Activated CD4-positive, alpha-beta T cell treated with anti-CD3 and anti-CD28 coated beads, Interleukin-2, amount 10 ng/mL, durations not matched to agents 24 days and 14 days (primary cell): ENCODE measurements at regions of chr1 and their contacts with region 1.

Region 1: DNA sequence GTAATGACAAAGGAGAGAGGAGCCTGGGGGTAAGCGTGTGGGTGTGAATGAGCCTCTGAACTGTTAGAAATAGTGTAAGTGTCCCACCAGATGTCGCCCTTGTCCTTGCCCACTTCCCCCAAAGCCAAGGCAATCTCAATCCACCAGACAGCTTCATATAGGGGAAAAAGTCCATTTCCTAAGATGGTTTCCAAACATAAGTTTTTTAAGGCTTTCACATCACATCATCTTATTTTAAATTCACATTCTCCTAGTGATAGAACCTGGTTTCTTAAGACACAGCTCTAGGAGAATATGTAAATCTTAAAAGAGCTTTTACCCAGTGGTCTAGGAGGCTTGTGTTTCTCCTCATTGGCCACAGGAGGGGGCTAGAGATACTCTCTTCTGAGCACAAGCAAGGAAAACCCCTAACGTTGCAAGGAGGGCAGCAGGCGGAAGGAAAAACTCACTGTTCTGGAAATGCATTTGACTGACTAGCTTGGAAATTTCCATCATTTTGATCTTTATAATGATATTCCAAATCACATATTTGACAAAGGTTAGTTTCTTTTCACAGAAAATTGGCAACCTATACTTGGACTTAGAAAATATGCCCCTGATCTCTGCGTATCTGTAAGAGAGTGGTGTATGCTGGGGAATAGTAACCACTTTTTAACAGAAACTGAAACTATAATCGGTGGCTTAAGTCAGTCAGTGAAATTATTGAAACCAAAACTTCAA is 51.9 kb upstream of the LPAR3 start:
- DNase-seq: peak; percentile 94
- H3K4me3 Mint-ChIP-seq: peak overlapping the region; percentile 80
- H3K27ac Mint-ChIP-seq: peak overlapping the region; percentile 86
- H3K4me1 Mint-ChIP-seq: peaks cover 27% of the 10 kb centered on the region
- H3K27me3 Mint-ChIP-seq: no peaks in the 10 kb centered on the region

Region 2: GRCh38 chr1:84735483-84735882 is 209.4 kb before region 1 on chr1:
- intact Hi-C with region 1: no loop called
- DNase-seq: no peak
- H3K4me3 Mint-ChIP-seq: no peak overlapping the region
- H3K27ac Mint-ChIP-seq: no peak overlapping the region
- H3K4me1 Mint-ChIP-seq: no peaks in the 10 kb centered on the region
- H3K27me3 Mint-ChIP-seq: peaks cover 39% of the 10 kb centered on the region

Region 3: DNA sequence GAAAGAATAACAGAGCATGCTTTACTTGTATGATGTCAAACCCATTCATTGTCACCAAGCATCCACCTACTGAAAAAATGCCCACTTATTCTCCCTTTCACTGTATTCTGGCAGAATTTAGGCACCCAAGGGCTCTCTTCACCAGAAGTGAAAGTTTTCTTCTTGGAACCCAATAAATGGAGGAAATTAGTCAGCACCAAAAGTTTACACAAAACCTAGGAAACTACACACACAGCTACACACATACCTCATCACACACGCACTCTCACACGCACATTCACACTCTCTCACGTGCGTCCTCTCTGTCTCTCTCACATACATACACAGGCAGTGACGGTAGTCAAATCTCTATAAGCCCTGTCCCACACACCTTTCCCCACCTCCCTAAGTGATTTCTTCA is 14.4 kb after region 1 on chr1:
- intact Hi-C with region 1: loop called (anchors 1 kb)
- DNase-seq: peak; percentile 85
- H3K4me3 Mint-ChIP-seq: no peak overlapping the region
- H3K27ac Mint-ChIP-seq: peak overlapping the region; percentile 69
- H3K4me1 Mint-ChIP-seq: peaks cover 22% of the 10 kb centered on the region
- H3K27me3 Mint-ChIP-seq: no peaks in the 10 kb centered on the region

Region 4: GRCh38 chr1:84988588-84988987 is 43.7 kb after region 1 on chr1:
- intact Hi-C with region 1: loop called (anchors 1 kb)
- DNase-seq: peak; percentile 71
- H3K4me3 Mint-ChIP-seq: peak overlapping the region; percentile 67
- H3K27ac Mint-ChIP-seq: peak overlapping the region; percentile 72
- H3K4me1 Mint-ChIP-seq: peaks cover 53% of the 10 kb centered on the region
- H3K27me3 Mint-ChIP-seq: no peaks in the 10 kb centered on the region

Region 5: GRCh38 chr1:85027242-85027983 is 82.5 kb after region 1 on chr1:
- intact Hi-C with region 1: loop called (anchors 1 kb)
- DNase-seq: peak; percentile 74
- H3K4me3 Mint-ChIP-seq: no peak overlapping the region
- H3K27ac Mint-ChIP-seq: peak overlapping the region; percentile 72
- H3K4me1 Mint-ChIP-seq: peaks cover 8% of the 10 kb centered on the region
- H3K27me3 Mint-ChIP-seq: peaks cover 5% of the 10 kb centered on the region

Region 6: DNA sequence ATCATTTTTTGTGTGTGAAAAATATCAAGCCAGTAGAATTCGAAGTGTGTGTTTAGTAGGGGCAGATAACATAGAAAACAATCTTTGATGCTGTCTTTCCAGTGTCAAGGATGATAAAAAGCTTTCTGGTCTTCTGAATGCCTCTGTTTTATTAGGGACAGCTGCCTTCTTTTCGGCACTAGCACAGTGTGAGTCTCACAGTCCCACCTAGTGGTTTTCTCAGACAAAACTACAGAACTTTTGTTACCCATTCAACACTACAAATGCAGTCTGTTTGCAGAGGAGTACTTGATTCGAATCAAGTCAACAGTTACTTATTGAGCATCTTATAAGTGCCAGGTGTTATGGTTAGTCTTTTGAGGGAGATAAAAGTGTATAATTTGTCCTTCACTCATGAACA is 134.0 kb after region 1 on chr1:
- intact Hi-C with region 1: loop called (anchors 1 kb)
- DNase-seq: peak; percentile 62
- H3K4me3 Mint-ChIP-seq: no peak overlapping the region
- H3K27ac Mint-ChIP-seq: no peak overlapping the region
- H3K4me1 Mint-ChIP-seq: peaks cover 6% of the 10 kb centered on the region
- H3K27me3 Mint-ChIP-seq: peaks cover 34% of the 10 kb centered on the region

Region 7: DNA sequence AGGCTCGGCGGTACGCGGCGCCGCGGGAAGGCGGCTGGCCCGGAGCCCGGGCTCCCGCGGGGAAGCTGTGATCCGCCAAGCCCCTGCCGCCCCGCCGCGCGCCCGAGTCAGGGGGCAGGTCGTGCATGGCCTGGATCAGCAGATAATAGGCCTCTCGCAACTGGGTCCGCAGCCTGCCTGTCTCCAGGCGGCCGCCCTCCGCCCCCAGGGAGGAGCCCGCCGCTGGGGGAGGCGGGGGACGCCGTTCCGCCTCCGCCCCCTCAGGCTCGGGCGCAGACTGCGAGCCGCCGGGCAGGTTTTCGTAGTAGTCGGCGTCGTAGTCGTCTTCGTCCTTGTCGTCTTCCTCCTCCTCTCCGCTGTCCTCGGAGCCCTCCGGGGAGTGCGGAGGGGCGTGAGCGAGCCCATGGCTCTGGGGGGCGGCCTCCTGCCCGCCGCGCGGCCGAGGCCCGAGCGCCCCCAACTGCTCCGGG is 256.0 kb after region 1 on chr1 and contains the start of gene SYDE2:
- intact Hi-C with region 1: loop called (anchors 2 kb)
- DNase-seq: peak; percentile 94
- H3K4me3 Mint-ChIP-seq: peak within 1 kb of the TSS; percentile 94
- H3K27ac Mint-ChIP-seq: peak within 1 kb of the TSS; percentile 87
- H3K4me1 Mint-ChIP-seq: peaks cover 12% of the 10 kb centered on the region
- H3K27me3 Mint-ChIP-seq: peaks cover 39% of the 10 kb centered on the region
- total RNA-seq, gene SYDE2: 1.2 and 1.4 TPM in 2 replicates

Region 8: GRCh38 chr1:85297855-85298629 is 353.1 kb after region 1 on chr1:
- intact Hi-C with region 1: loop called (anchors 2 kb)
- DNase-seq: peak; percentile 82
- H3K4me3 Mint-ChIP-seq: peak overlapping the region; percentile 56
- H3K27ac Mint-ChIP-seq: peak overlapping the region; percentile 86
- H3K4me1 Mint-ChIP-seq: peaks cover 25% of the 10 kb centered on the region
- H3K27me3 Mint-ChIP-seq: peaks cover 49% of the 10 kb centered on the region

Region 9: DNA sequence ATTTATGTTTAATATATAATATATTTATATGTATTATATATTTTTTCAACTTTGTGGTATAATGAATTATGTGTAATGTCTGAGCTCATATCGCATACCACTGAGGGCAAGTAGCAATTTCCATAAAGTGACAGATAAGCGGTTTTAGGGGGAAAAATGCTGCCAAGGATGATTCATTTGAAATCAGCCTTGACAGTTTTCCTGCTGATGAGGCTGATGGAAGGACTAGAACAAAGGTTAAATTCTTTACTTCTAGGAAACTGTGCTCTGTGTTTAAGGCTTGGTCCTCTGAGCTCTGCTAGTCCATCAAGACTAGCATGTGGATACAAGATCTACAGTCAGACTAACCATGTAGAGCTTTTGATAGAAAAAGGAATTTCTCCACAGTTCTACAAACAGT is 539.3 kb after region 1 on chr1:
- intact Hi-C with region 1: no loop called
- DNase-seq: no peak
- H3K4me3 Mint-ChIP-seq: no peak overlapping the region
- H3K27ac Mint-ChIP-seq: no peak overlapping the region
- H3K4me1 Mint-ChIP-seq: no peaks in the 10 kb centered on the region
- H3K27me3 Mint-ChIP-seq: peaks cover 17% of the 10 kb centered on the region